ENCODE measurements at regions of chr17 and their contacts with region 1.

Region 1: GRCh38 chr17:6843241-6843880 is 11.8 kb upstream of the TEKT1 start:
- DNase-seq: no peak
- H3K4me3 ChIP-seq: no peak overlapping the region
- H3K27me3 ChIP-seq: peaks cover 4% of the 10 kb centered on the region; the same call in 1 of the 2 replicates
- CTCF ChIP-seq: peak; percentile 34; the same call in 1 of the 2 replicates

Region 2: DNA sequence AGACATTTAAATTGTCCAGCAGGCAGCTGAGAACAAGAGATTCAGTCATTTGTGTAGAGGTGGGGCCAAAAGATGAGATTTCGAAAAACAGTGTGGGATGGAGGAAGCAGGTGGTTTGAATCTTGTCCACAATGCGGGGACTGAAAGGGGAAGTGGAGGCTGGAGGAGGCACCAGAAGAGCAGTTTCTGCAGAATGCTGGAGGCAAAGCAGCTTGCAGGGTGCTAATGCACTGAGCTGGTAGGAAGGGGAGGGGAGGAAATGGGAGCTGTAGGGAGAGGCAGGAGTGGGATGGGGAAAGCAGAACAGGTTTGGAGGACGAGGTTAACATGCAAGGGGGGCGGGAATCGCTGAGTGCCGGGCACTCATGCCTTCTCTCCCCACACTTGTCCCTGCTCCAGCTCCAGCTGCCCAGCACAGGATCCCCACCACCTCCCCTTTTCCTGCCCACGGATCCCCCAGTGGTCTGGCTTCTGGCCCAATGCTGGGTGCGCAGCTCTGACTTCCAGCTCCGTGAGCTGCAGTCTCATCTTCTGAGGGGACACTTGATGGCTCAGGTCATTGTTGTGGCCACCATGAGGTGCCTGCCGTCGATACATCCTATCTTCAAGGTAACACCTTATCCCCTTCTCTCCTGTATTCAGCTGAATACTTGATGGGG is 182.4 kb before region 1 on chr17:
- CTCF ChIA-PET with region 1: interaction called, 65 read pairs
- POLR2A ChIA-PET with region 1: no interaction called
- DNase-seq: no peak
- H3K4me3 ChIP-seq: no peak overlapping the region
- H3K27me3 ChIP-seq: peaks cover 18% of the 10 kb centered on the region
- CTCF ChIP-seq: no peak

Region 3: GRCh38 chr17:6666077-6666521 is 177.3 kb before region 1 on chr17:
- CTCF ChIA-PET with region 1: interaction called, 65 read pairs
- POLR2A ChIA-PET with region 1: no interaction called
- DNase-seq: peak; percentile 25
- H3K4me3 ChIP-seq: no peak overlapping the region
- H3K27me3 ChIP-seq: peaks cover 25% of the 10 kb centered on the region
- CTCF ChIP-seq: peak; percentile 93

Region 4: GRCh38 chr17:6818938-6819337 is 24.4 kb before region 1 on chr17:
- CTCF ChIA-PET with region 1: interaction called, 11 read pairs
- POLR2A ChIA-PET with region 1: no interaction called
- DNase-seq: no peak
- H3K4me3 ChIP-seq: no peak overlapping the region
- H3K27me3 ChIP-seq: no peaks in the 10 kb centered on the region
- CTCF ChIP-seq: no peak

Region 5: GRCh38 chr17:6831661-6832263 is 11.6 kb before region 1 on chr17 and contains the start of gene TEKT1:
- CTCF ChIA-PET with region 1: interaction called, 16 read pairs
- POLR2A ChIA-PET with region 1: no interaction called
- DNase-seq: no peak
- H3K4me3 ChIP-seq: no peak within 1 kb of the TSS
- H3K27me3 ChIP-seq: peaks cover 15% of the 10 kb centered on the region
- CTCF ChIP-seq: no peak
- polyA plus RNA-seq, gene TEKT1: not detected in 2 replicates

Region 6: DNA sequence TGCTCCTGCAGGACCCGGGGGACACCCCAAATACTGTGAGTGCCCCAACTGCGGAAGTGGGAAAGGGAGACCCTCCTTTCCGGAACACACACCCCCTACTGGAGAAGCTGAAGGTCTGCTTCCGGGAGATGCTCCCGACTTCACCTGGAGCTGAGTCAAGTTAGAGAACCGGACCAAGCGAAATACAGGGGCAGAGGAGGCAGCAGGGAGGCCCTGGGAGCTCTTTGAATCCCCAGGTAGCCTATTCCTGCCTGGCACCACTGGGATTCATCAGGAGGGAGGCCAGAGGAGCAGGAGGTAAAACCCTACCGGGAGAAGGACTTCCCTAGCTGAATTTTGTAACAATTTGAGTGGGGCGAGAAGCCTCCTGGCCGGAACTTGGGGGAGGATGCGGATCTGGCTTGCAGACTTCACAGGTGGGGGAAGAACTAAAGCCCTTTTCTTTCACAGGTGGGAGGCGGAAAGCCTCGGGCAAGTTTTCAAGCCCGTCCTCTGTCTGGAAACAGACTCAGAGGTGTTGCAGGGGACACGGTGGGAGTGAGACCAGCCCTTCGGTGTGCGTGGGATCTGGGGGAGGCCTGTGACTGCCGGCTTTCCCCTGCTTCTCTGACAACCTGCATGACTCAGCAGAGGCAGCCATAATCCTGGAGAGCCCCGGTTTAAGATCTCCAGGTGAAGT is 10.5 kb after region 1 on chr17:
- CTCF ChIA-PET with region 1: interaction called, 15 read pairs
- POLR2A ChIA-PET with region 1: no interaction called
- DNase-seq: no peak
- H3K4me3 ChIP-seq: no peak overlapping the region
- H3K27me3 ChIP-seq: no peaks in the 10 kb centered on the region; the same call in 1 of the 2 replicates
- CTCF ChIP-seq: peak; percentile 24; the same call in 1 of the 2 replicates

Region 7: DNA sequence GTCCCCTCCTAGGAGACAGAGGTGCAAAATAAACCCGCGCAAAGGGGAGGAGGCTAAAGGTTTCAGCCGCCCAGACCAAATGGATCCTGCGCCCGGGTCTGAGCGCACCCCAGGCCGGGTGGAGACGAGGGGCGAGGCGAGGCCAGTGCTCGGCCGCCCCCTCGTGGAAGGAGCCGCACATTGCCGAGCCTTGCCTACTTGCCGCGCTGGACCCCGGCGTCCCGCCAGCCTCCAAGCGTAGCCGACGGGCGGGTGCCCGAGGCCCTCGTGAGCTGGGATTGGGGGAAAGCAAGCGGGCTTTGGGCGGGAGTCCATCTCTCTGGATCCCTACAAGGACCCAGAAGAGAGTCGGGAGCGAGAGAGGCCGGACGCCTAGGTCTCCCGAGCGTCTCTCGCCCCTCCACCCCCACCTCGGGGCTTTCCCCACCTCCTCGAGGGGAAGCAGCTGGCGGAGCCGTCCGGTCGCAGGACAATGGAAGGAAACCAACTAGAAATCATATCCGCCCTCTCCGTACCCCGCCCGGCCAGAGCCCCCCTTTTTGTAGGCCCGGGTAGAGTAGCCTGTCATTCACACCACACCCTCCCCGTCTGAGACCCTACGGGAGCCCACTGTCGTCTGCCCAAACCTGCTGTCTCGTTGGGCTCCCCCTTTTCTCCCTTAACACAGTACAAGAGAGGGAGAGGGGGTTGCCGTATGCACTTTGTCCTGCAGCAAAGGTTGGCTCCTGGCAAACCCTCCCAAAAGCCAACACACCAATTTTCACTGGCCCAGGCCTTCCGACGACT is 178.8 kb after region 1 on chr17:
- CTCF ChIA-PET with region 1: interaction called, 12 read pairs
- POLR2A ChIA-PET with region 1: no interaction called
- DNase-seq: no peak
- H3K4me3 ChIP-seq: no peak overlapping the region
- H3K27me3 ChIP-seq: no peaks in the 10 kb centered on the region
- CTCF ChIP-seq: peak; percentile 97